Mammary epithelial cell (primary cell): ENCODE measurements at regions of chr15 and their contacts with region 1.

Region 1: GRCh38 chr15:31365655-31366127 is 39.1 kb downstream of the KLF13 start:
- DNase-seq: peak; percentile 70
- H3K4me3 ChIP-seq: no peak overlapping the region
- H3K27ac ChIP-seq: no peak overlapping the region
- H3K4me1 ChIP-seq: peaks cover 57% of the 10 kb centered on the region
- H3K27me3 ChIP-seq: no peaks in the 10 kb centered on the region
- CTCF ChIP-seq: peak; percentile 22 to 53

Region 2: DNA sequence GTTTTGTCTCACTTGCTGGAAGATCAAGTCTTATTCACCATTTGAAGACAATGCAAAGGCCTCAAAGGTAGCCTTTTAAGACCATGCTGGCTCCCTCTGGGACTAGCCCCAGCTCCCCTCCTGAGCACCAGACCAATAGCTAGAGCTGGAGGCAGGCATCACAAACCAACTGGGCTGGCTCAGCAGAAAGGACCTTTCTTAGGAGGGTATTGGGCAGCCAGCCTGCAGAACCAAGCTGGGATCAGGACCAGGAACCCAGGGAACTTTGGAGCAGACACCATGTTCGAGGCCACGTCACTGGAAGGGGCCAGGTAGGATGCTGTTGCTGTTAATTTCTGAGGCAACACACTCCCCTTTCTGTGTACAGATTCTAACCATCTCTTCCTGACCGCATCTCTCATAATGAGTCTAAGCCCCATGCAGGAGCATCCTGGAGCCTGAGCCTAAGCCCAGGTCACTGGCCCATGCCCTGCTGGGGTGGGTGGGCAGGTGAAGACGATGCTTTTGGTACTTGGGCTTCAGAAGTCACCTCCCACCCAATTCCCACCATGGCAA is 120.5 kb before region 1 on chr15:
- CTCF ChIA-PET with region 1: no interaction called
- dilution Hi-C with region 1: no loop called
- in situ Hi-C with region 1: no loop called
- intact Hi-C with region 1: no loop called
- DNase-seq: no peak
- H3K4me3 ChIP-seq: no peak overlapping the region
- H3K27ac ChIP-seq: no peak overlapping the region
- H3K4me1 ChIP-seq: no peaks in the 10 kb centered on the region
- H3K27me3 ChIP-seq: no peaks in the 10 kb centered on the region
- CTCF ChIP-seq: no peak

Region 3: DNA sequence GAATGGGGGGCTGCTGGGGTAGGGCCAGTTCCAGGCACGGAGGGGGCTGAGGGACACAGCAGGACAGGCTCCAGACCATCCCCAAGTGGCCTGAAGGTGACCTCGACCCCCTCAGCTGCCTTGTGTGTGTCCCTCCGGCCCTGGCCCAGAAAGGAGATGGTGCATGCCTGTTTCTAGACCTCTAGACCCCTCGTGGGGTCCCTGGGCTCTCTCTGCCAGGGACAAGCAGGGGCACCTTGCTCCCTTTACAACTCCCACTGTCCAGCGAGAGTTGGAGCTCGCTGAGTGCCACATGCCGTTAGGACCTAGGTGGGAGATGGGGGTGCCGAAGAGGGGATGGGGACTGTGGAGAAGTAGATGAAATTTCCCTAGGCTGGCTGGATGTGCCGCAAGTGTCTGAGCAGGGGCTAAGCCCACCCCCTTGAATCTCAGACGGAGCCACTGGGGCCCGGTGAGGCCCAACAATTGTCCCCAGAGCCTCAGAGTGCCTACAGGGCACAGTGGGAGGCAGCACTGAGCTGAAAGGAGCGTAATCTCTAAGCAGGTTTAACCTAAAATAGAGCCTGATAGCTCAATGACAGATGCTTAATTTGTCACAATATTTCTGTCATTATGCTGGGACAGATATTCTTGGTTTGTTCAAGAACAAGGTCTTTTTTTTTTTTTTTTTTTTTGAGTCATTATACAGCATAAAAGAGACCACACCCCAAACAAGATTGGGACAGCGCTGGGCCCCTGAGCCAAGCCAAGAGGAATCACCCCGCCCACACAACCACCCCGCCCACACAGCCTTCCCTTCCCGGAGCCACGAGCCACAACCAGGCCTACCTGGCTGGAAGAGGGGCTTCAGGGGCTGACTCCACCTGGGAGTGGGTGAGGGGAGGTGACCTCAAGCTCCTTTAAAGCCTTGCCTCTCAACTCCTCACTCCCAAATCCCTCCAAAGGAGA is 62.6 kb before region 1 on chr15:
- CTCF ChIA-PET with region 1: no interaction called
- dilution Hi-C with region 1: no loop called
- in situ Hi-C with region 1: no loop called
- intact Hi-C with region 1: no loop called
- DNase-seq: no peak
- H3K4me3 ChIP-seq: no peak overlapping the region
- H3K27ac ChIP-seq: no peak overlapping the region
- H3K4me1 ChIP-seq: no peaks in the 10 kb centered on the region
- H3K27me3 ChIP-seq: no peaks in the 10 kb centered on the region
- CTCF ChIP-seq: no peak

Region 4: DNA sequence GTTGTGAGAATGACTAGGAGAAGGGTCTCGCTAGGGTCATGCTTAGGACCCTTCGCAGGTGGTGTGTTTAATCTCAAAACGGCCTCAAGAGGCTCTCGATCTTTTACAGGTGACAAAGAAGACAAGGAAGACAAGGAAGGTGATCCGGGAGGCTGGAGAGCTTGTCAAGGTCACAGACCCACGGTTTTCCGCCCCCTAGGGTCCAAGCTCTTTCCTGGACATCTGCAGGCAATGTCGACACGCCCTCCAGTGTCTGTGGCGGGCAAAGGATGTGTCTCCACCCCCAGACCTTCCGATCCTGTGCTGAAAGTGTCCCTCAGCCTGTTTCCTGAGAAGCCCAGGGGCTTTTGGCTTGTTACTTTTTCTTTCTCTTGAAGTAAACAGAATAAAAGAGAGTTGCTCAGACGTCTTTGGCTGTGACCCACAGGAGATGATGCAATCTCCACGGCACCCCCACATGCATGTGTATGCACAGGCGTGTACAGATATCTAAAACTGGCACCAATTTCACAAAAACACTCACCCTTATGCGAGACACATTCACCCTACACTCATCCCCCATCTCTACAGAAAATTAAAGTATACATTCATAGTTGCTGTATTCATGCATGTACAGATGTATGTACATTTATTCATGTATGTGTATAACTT is 69.7 kb after region 1 on chr15:
- CTCF ChIA-PET with region 1: no interaction called
- dilution Hi-C with region 1: no loop called
- in situ Hi-C with region 1: no loop called
- intact Hi-C with region 1: loop called (anchors 5 kb)
- DNase-seq: peak; percentile 28
- H3K4me3 ChIP-seq: no peak overlapping the region
- H3K27ac ChIP-seq: no peak overlapping the region
- H3K4me1 ChIP-seq: peaks cover 17% of the 10 kb centered on the region
- H3K27me3 ChIP-seq: no peaks in the 10 kb centered on the region
- CTCF ChIP-seq: peak; percentile 48 to 75